ENCODE measurements at regions of chr4 and their contacts with region 1.

Region 1: DNA sequence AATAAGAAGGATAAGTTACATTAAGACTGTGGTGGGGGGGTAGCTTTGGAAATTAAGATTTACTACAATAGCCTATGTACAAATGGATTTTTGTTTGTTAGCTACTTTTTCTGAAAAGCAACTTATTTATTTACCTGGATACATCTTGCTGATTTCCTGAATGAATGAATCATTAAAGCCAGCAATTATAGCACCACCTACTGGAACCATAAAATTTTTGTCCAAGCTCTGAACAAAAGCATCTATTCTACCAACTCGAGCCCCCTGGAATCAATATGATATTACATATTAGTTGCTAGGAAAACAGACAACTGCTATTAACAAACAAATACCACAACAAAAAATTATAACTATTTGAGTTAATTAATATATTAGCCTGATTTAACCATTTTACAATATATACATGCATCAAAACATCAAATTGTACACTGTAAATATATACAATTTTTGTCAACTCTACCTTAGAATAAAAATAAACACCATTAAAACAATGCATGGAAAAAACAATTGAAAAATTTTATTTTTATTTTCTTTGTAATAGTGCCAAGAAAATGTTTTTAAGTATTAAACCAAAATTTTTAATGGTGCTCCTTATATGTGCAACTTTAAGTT is 15.3 kb downstream of the SEPSECS start:
- DNase-seq: no peak
- H3K4me3 Mint-ChIP-seq: no peak overlapping the region
- H3K27ac Mint-ChIP-seq: no peak overlapping the region
- H3K4me1 Mint-ChIP-seq: no peaks in the 10 kb centered on the region
- H3K27me3 Mint-ChIP-seq: no peaks in the 10 kb centered on the region

Region 2: DNA sequence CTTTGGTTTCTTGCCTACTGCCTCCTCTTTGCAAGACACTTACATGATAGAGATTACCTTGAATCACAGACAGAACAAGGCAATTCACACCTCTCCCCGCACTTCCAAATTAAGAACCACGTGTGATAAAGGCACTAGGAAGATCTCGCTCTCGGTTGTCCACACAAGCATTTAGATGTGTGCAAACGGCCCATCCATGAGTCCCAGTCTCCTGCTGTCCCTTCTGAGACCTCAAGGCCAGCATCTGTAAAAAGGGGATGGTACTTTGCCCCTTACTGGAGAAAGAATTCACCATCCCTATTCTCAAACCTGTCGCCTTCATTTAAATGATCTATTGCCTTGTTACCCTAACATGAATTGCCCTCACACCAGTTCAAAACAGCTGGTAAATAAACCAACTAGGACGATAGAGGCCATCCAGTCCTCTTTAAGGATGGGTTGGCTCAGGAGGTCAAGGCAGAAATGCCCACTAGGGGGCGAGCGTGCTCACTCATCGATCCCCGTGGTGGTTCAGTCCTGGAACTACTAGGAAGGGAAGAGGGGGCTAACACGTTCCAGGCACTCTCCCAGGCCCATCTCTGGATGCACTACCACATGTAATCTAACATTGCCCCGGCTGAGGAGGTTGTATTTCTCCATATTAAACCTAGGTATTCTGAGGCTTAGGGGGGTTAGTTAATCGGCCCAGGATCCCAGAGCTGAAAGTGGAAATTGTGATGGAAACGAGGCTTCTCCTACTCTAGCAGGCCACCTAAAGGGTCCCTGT is 656.4 kb before region 1 on chr4:
- intact Hi-C with region 1: loop called (anchors 10 kb)
- DNase-seq: peak; percentile 47
- H3K4me3 Mint-ChIP-seq: no peak overlapping the region
- H3K27ac Mint-ChIP-seq: no peak overlapping the region
- H3K4me1 Mint-ChIP-seq: no peaks in the 10 kb centered on the region
- H3K27me3 Mint-ChIP-seq: peaks cover 11% of the 10 kb centered on the region

Region 3: GRCh38 chr4:24956763-24957162 is 188.2 kb before region 1 on chr4:
- intact Hi-C with region 1: no loop called
- DNase-seq: no peak
- H3K4me3 Mint-ChIP-seq: no peak overlapping the region
- H3K27ac Mint-ChIP-seq: no peak overlapping the region
- H3K4me1 Mint-ChIP-seq: no peaks in the 10 kb centered on the region
- H3K27me3 Mint-ChIP-seq: no peaks in the 10 kb centered on the region

Region 4: GRCh38 chr4:24980064-24980690 is 164.8 kb before region 1 on chr4:
- intact Hi-C with region 1: loop called (anchors 1 kb)
- DNase-seq: peak; percentile 40
- H3K4me3 Mint-ChIP-seq: no peak overlapping the region
- H3K27ac Mint-ChIP-seq: no peak overlapping the region
- H3K4me1 Mint-ChIP-seq: peaks cover 5% of the 10 kb centered on the region
- H3K27me3 Mint-ChIP-seq: peaks cover 12% of the 10 kb centered on the region

Region 5: DNA sequence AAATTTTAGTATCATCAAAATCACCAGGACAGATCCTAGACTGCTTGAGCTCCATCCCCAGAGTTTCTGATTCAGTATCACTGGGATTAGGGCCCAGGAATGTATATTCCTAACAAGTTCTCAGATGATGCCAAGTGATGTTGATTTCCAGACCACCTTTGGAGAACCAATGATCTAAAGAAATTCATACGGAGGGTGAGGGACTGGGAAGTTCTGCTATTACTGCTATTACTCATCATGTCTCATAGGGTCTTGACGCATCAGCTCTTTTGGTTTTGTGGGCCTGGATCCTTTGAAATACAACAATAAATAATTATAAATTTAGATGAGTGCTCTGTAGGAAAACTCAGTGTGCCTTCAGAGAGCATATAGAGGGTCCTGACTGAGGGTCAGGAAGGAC is 54.5 kb before region 1 on chr4:
- intact Hi-C with region 1: loop called (anchors 2 kb)
- DNase-seq: no peak
- H3K4me3 Mint-ChIP-seq: no peak overlapping the region
- H3K27ac Mint-ChIP-seq: no peak overlapping the region
- H3K4me1 Mint-ChIP-seq: peaks cover 21% of the 10 kb centered on the region
- H3K27me3 Mint-ChIP-seq: peaks cover 45% of the 10 kb centered on the region